HCT116 (cell line): ENCODE measurements at regions of chr17 and their contacts with region 1.

Region 1: GRCh38 chr17:40168262-40168832 is 8.9 kb upstream of the RAPGEFL1 start:
- DNase-seq: peak; percentile 28
- ATAC-seq: peak; percentile 73
- H3K4me3 ChIP-seq: no peak overlapping the region
- H3K27ac ChIP-seq: peak overlapping the region; percentile 18; the same call in 1 of the 2 replicates
- H3K4me1 ChIP-seq: peaks cover 0 to 4% of the 10 kb centered on the region in 2 experiments; a peak in 2 of 4 replicates
- H3K27me3 ChIP-seq: no peaks in the 10 kb centered on the region
- CTCF ChIP-seq: peak; percentile 65 to 67 (median 66); a peak in 5 of 6 replicates
- POLR2A ChIP-seq: no peak
- RAD21 ChIP-seq: peak; percentile 80

Region 2: DNA sequence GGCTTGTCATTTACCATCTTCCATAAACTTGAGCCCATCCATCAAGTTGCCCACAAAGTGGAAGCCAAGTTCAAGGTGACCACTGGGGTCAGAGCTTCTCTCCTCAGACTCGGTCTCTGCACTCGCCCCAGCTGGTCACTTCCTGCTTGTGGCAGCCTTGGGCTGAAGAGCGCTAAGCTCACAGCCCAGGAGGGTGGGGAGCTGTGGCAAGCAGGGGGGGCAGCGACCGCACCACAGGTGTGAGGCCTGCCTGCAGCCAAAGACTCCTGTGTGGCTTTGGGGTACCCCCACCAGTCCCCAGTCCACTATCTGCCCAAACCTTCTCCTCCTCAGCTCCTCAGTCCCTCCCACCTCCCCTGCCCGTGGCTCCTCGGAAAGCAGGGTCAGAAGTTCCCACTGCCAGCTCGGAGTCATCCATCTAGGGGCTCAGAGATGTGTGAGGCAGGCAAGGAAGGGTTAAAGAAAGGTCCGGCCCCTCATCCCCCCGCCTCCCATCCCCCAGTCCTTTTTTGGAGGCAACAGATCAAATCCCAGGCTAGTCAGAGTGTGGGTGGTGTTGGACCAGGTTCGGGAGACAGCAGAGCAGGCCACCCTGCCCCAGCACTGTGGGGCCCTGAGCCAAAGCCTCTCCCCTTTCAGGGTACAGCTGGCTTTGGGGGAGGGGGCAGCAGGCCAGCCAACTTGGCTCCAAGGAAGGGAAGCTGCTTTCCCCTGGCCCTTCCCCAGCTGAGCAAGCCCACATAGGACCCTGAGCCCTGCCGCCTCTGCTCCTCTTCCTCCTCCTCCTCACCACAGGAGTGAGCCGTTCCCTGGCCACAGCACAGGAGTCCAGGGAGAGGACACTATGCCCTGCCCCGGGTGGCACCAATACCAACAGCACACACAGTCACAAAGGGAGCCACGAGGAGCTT is 149.9 kb before region 1 on chr17:
- CTCF ChIA-PET with region 1: interaction called, 3 read pairs
- POLR2A ChIA-PET with region 1: no interaction called
- RAD21 ChIA-PET with region 1: no interaction called
- intact Hi-C with region 1: loop called (anchors 1 kb)
- DNase-seq: no peak
- ATAC-seq: no peak
- H3K4me3 ChIP-seq: no peak overlapping the region
- H3K27ac ChIP-seq: no peak overlapping the region
- H3K4me1 ChIP-seq: peaks cover 0 to 13% of the 10 kb centered on the region in 2 experiments; a peak in 2 of 4 replicates
- H3K27me3 ChIP-seq: no peaks in the 10 kb centered on the region
- CTCF ChIP-seq: no peak
- POLR2A ChIP-seq: no peak
- RAD21 ChIP-seq: no peak

Region 3: GRCh38 chr17:40179923-40180659 is 11.7 kb after region 1 on chr17:
- CTCF ChIA-PET with region 1: interaction called, 19 read pairs
- POLR2A ChIA-PET with region 1: interaction called, 4 read pairs
- RAD21 ChIA-PET with region 1: no interaction called
- intact Hi-C with region 1: no loop called
- DNase-seq: no peak
- ATAC-seq: peak; percentile 70
- H3K4me3 ChIP-seq: peak overlapping the region; percentile 4 to 40; a peak in 3 of 4 replicates
- H3K27ac ChIP-seq: peak overlapping the region; percentile 86
- H3K4me1 ChIP-seq: peaks cover 51 to 62% of the 10 kb centered on the region in 2 experiments
- H3K27me3 ChIP-seq: no peaks in the 10 kb centered on the region
- CTCF ChIP-seq: no peak
- POLR2A ChIP-seq: no peak
- RAD21 ChIP-seq: no peak

Region 4: GRCh38 chr17:40251576-40251975 is 83.2 kb after region 1 on chr17:
- CTCF ChIA-PET with region 1: no interaction called
- POLR2A ChIA-PET with region 1: no interaction called
- RAD21 ChIA-PET with region 1: no interaction called
- intact Hi-C with region 1: no loop called
- DNase-seq: peak; percentile 78
- ATAC-seq: peak; percentile 84
- H3K4me3 ChIP-seq: peak overlapping the region in 1 of 2 experiments; percentile 11; a peak in 1 of 4 replicates
- H3K27ac ChIP-seq: peak overlapping the region; percentile 15; the same call in 1 of the 2 replicates
- H3K4me1 ChIP-seq: peaks cover 17 to 32% of the 10 kb centered on the region in 2 experiments
- H3K27me3 ChIP-seq: no peaks in the 10 kb centered on the region
- CTCF ChIP-seq: no peak
- POLR2A ChIP-seq: no peak
- RAD21 ChIP-seq: no peak

Region 5: DNA sequence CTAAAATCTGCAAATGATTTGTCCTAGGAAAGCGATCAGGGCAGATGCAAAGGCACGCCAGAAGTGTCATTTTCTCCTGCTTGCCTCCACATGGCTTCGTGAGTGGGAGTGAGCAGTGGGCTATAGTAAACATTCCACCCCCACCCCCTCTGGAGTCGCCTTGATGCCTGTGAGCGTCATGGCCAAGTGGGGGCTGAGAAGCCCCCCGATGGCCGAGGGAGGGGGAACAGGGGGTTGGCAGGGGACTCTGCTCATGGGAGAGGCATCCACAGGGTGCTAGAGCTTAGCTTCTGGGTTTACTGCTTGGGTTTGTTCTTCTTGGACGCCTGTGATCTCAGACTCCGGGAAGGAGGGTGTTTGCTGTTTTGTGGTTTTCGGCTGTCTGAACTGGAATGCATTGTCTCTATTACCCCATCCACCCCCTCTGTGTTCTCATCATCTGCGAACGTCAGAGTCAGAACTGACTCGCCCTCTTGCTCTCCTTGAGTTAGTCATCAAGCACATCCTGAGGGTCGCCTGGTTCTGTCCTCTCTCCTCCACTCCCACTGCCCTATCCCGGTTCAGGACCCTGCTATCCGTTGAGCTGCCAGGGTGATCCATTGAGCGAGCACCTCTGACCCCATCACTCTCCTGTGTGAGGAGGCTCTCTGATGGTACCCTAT is 317.6 kb after region 1 on chr17:
- CTCF ChIA-PET with region 1: no interaction called
- POLR2A ChIA-PET with region 1: no interaction called
- RAD21 ChIA-PET with region 1: no interaction called
- intact Hi-C with region 1: no loop called
- DNase-seq: peak; percentile 88
- ATAC-seq: peak; percentile 76
- H3K4me3 ChIP-seq: peak overlapping the region in 1 of 2 experiments; percentile 36; a peak in 2 of 4 replicates
- H3K27ac ChIP-seq: peak overlapping the region; percentile 49
- H3K4me1 ChIP-seq: peaks cover 69 to 91% of the 10 kb centered on the region in 2 experiments
- H3K27me3 ChIP-seq: no peaks in the 10 kb centered on the region
- CTCF ChIP-seq: no peak
- POLR2A ChIP-seq: no peak
- RAD21 ChIP-seq: no peak